ENCODE measurements at regions of chrX and their contacts with region 1.

Region 1: DNA sequence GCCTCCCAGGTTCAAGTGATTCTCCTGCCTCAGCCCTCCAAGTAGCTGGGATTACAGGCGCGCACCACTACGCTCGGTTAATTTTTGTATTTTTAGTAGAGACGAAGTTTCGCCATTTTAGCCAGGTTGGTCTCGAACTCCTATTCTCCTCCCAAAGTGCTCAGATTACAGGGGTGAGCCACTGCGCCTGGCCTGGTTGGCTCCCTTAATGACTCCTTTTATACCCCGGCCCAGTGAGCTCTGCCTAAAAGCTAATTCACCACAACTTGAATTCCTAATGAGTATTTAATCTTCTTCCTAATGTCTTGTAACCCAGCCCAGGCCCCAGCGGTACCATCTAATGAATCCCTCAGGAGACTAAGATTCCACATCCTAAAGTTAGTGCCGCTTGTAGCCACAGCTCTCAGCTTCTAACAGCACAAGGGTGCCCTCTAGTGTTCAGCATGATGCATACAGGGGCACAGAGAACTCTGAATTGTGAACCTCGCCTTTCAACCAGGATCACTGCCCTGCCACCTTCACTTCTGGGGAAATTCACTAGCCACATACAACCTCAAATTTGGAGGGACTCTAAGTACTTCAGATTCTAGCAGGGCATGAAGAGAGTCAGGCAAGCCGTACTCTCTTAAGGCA is 89.5 kb downstream of the OR13H1 start:
- DNase-seq: peak in 1 of 3 donors; percentile 45
- ATAC-seq: peak; percentile 78
- H3K4me3 ChIP-seq: no peak overlapping the region
- H3K4me1 ChIP-seq: no peaks in the 10 kb centered on the region
- CTCF ChIP-seq: peak; percentile 21

Region 2: DNA sequence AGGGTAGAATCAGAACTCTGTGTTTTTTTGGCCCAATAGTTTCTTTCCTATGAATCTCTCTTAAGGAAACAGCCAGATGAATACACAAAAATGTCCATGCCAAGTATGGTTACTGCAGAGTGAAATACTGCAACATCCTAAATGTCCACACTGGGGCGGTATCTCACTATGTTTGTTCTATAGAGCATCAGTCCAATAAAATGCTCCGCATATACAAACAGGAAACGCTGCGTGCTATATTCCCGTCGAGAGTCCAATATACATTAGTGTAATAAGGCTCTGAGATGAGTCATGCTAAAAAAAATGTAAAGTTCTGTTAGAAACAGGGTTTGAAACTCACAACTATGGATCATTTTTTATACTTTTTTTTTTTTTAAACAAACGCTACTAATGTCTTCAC is 657.5 kb before region 1 on chrX:
- intact Hi-C with region 1: loop called (anchors 5 to 10 kb)
- DNase-seq: peak in 1 of 3 donors; percentile 66
- ATAC-seq: peak; percentile 95
- H3K4me3 ChIP-seq: no peak overlapping the region
- H3K4me1 ChIP-seq: no peaks in the 10 kb centered on the region
- CTCF ChIP-seq: no peak

Region 3: GRCh38 chrX:130984782-130985181 is 648.6 kb before region 1 on chrX:
- intact Hi-C with region 1: loop called (anchors 5 to 10 kb)
- DNase-seq: no peak
- ATAC-seq: no peak
- H3K4me3 ChIP-seq: no peak overlapping the region
- H3K4me1 ChIP-seq: no peaks in the 10 kb centered on the region
- CTCF ChIP-seq: no peak

Region 4: GRCh38 chrX:131010186-131010585 is 623.2 kb before region 1 on chrX:
- intact Hi-C with region 1: no loop called
- DNase-seq: no peak
- ATAC-seq: no peak
- H3K4me3 ChIP-seq: no peak overlapping the region
- H3K4me1 ChIP-seq: no peaks in the 10 kb centered on the region
- CTCF ChIP-seq: no peak

Measured in mucosa of descending colon (tissue), 3 donors.